Right ventricle myocardium inferior (tissue), 1 donor: ENCODE measurements at regions of chr15 and their contacts with region 1.

Region 1: DNA sequence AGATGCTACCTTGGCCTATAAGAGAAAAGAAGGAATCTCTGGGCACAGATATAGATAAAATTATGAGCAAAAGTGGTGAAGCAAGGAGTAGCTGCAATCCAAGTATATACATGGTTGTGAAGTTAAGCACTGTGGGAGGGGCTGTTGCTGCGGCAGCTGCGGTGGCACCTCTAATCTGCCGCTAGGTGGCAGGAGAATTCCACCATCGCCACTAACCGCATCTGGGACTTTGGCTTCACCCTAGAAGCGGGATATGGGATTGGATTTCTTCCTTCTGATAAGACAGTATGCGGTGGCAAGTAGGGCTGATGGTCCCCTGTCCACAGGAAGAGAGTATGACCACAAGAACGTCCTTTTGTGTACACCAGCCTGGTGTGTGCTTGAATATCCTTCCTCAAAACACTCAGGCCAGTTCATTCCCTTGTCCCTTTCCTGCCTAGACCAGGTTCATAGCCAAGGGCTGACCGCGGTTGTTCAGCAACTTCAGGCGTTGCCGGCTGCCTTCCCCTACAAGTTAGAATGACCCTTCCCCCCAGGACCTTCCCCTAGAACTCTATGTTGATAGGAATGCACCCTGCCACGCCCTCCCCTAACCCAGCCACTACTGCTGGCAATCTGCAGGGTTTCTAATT is 5.1 kb downstream of the MAGEL2 start:
- DNase-seq: no peak
- ATAC-seq: peak; percentile 57

Region 2: GRCh38 chr15:23570486-23570885 is 72.0 kb before region 1 on chr15:
- intact Hi-C with region 1: no loop called
- DNase-seq: no peak
- ATAC-seq: no peak

Region 3: GRCh38 chr15:23877502-23878412 is 235.2 kb after region 1 on chr15:
- intact Hi-C with region 1: loop called (anchors 5 kb)
- DNase-seq: no peak
- ATAC-seq: peak; percentile 57